ENCODE measurements at regions of chr7 and their contacts with region 1.

Region 1: DNA sequence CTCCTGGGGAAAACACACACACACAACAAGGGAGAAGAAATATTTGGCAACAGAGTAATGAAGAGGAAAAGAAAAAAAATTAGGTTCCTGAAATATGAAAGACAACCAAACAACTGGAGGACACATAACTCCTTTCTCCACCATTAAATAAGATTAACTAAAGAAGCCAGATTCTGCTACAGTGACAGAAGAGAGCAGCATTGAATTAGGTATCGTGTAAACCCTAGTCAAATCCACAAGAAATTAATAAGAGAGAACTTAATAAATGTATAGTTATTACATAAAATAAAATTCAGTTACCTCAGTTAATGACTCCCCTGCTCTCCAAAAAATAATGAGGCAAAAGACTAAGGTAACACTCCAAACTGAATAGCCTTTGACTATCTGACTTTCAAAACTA is 306.7 kb downstream of the CRPPA start:
- DNase-seq: no peak
- ATAC-seq: no peak

Region 2: DNA sequence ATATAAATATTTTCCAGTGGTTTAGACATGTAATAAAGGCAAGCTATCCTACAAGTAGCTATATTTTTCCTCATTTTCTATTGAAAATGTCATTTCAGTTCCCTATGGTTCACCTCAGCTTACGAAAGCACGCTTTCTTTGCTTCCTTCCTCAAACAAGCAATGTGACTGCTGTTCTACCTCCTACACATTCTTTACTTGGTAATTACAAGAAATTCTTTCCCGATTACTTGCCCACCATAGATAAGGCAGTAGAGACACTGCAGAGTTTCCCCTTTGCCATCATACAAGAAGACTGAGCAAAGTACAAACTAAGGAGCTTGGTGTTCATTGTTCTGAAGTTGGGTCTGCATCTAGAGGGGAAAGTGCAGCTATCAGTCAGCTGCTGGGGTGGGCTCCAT is 57.3 kb after region 1 on chr7:
- intact Hi-C with region 1: no loop called
- DNase-seq: no peak
- ATAC-seq: no peak

Region 3: GRCh38 chr7:16420649-16421332 is 306.2 kb after region 1 on chr7:
- intact Hi-C with region 1: loop called (anchors 10 kb)
- DNase-seq: peak; percentile 90
- ATAC-seq: peak; percentile 89 to 95

Measured in left cardiac atrium (tissue), 4 donors.